HepG2 (cell line): ENCODE measurements at regions of chr6 and their contacts with region 1.

Region 1: GRCh38 chr6:110873981-110874879 is at the start of gene AMD1:
- DNase-seq: peak; percentile 95
- ATAC-seq: peak; percentile 91
- H3K4me3 ChIP-seq: peak within 1 kb of the TSS; percentile 96 to 99 (median 98)
- H3K27ac ChIP-seq: peak within 1 kb of the TSS; percentile 93
- H3K4me1 ChIP-seq: peaks cover 43% of the 10 kb centered on the region
- H3K27me3 ChIP-seq: no peaks in the 10 kb centered on the region; a peak in 1 of 5 replicates
- CTCF ChIP-seq: no peak
- EP300 ChIP-seq: peak in 1 of 2 experiments; percentile 24; a peak in 1 of 4 replicates
- POLR2A ChIP-seq: peak; percentile 99 to 100
- RAD21 ChIP-seq: no peak
- total RNA-seq, gene AMD1: 123 and 180 TPM in 2 replicates

Region 2: GRCh38 chr6:110528101-110528929 is 345.9 kb before region 1 on chr6:
- CTCF ChIA-PET with region 1: interaction called, 5 read pairs
- POLR2A ChIA-PET with region 1: interaction called, 5 read pairs
- in situ Hi-C with region 1: no loop called
- intact Hi-C with region 1: loop called (anchors 5 kb)
- DNase-seq: peak; percentile 62
- ATAC-seq: peak; percentile 55
- H3K4me3 ChIP-seq: no peak overlapping the region
- H3K27ac ChIP-seq: no peak overlapping the region
- H3K4me1 ChIP-seq: peaks cover 61% of the 10 kb centered on the region
- H3K27me3 ChIP-seq: no peaks in the 10 kb centered on the region
- CTCF ChIP-seq: peak; percentile 82
- EP300 ChIP-seq: peak in 1 of 2 experiments; percentile 18; a peak in 1 of 4 replicates
- POLR2A ChIP-seq: no peak
- RAD21 ChIP-seq: peak; percentile 71

Region 3: DNA sequence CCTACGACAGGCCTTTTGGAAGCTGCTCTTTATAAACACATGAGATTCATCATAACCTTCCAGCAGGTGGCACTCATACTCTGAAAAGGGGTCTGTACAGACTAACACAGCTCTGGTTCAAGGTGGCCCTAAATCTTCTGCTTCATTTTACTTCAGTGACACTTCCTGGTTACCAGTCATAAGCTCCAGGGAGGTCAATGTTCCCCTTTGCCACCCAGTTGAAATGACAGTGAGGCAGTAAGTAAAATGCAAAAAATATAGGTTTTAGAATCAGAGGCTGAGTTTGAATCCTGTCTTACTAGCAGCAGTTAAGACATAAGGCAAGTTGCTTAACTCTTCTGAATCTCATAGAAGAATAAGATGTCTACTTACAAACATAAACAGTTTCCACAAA is 191.8 kb before region 1 on chr6:
- CTCF ChIA-PET with region 1: interaction called, 7 read pairs
- POLR2A ChIA-PET with region 1: interaction called, 61 read pairs
- in situ Hi-C with region 1: loop called (anchors 5 kb)
- intact Hi-C with region 1: loop called (anchors 1 kb)
- DNase-seq: peak; percentile 85
- ATAC-seq: peak; percentile 98
- H3K4me3 ChIP-seq: peak overlapping the region in 1 of 3 experiments; percentile 6; a peak in 1 of 6 replicates
- H3K27ac ChIP-seq: peak overlapping the region; percentile 49
- H3K4me1 ChIP-seq: peaks cover 31% of the 10 kb centered on the region
- H3K27me3 ChIP-seq: no peaks in the 10 kb centered on the region
- CTCF ChIP-seq: peak; percentile 87
- EP300 ChIP-seq: no peak
- POLR2A ChIP-seq: no peak
- RAD21 ChIP-seq: peak; percentile 63; the same call in 1 of the 2 replicates

Region 4: DNA sequence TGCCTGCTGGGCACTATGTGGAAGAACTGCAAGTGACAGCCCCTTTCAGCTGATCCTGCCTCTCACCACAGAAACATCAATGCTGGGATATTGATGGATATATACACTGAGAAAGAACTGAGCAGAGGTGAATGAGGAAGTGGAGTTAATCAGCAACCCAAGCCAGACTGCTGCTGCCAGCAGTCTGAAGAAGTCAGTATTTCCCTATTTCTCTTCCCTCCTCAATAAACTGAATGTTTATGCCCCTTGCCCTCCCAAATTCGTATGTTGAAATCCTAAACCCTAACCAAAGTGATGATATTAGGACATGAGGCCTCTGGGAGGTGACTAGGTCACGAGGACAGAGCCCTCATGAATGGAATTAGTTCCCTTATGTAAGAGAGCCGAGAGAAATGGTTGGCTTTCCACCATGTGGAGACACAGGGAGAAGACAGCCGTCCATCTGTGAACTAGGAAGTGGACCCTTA is 135.3 kb before region 1 on chr6:
- CTCF ChIA-PET with region 1: no interaction called
- POLR2A ChIA-PET with region 1: interaction called, 7 read pairs
- in situ Hi-C with region 1: no loop called
- intact Hi-C with region 1: loop called (anchors 5 kb)
- DNase-seq: peak; percentile 86
- ATAC-seq: peak; percentile 99
- H3K4me3 ChIP-seq: peak overlapping the region in 2 of 3 experiments; percentile 23 to 24; a peak in 4 of 6 replicates
- H3K27ac ChIP-seq: peak overlapping the region; percentile 71
- H3K4me1 ChIP-seq: peaks cover 39% of the 10 kb centered on the region
- H3K27me3 ChIP-seq: no peaks in the 10 kb centered on the region
- CTCF ChIP-seq: peak; percentile 29
- EP300 ChIP-seq: peak in 1 of 2 experiments; percentile 56; a peak in 2 of 4 replicates
- POLR2A ChIP-seq: peak in 1 of 2 experiments; percentile 38; a peak in 1 of 4 replicates
- RAD21 ChIP-seq: no peak

Region 5: DNA sequence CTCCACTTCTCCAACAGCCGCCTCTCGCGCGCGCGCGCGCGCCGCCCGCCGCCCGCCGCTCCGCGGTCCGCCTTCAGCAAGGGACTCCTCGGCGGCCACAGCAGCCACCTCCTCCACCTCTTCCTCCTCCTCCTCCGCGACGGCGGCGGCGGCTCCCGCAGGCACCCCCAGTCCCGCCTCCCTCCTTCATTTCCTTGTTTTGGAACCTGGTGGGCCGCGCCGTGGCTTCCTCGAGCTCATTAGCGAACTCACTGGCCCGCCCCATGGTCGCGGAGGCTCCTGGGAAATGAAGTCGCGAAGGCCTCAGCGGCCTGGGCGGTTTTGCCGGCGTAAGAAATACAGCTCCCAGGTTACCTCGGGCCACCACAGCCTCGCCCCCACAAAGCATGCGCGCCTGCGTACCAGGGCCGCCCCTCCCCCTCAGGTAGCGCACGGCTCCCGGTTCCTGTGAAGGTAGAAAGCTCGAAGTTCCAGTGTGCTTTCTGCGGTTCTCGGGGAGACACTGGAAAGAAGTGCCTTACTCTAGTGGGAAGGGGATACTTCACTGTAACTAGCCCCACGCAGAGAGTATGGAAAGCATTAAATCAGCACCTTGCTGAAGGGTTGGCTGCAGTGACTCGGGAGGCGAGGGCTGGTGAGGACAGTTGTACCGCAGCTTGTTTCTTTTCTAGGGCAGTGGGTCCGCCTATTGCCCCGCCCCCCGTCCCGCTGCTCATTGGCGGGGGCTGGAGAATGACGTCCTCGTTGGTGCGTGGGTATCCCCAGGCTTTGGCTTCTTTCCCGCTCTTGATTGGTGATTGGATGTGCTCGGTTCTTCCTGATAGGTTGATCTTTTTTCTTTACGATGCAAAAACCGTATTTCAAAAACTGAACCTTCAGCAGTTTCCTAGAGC is 58.8 kb before region 1 on chr6 and contains the start of gene CDK19:
- CTCF ChIA-PET with region 1: no interaction called
- POLR2A ChIA-PET with region 1: interaction called, 163 read pairs
- in situ Hi-C with region 1: no loop called
- intact Hi-C with region 1: loop called (anchors 1 kb)
- DNase-seq: peak; percentile 98
- ATAC-seq: peak; percentile 91
- H3K4me3 ChIP-seq: peak within 1 kb of the TSS; percentile 92 to 94 (median 92)
- H3K27ac ChIP-seq: peak within 1 kb of the TSS; percentile 100
- H3K4me1 ChIP-seq: peaks cover 38% of the 10 kb centered on the region
- H3K27me3 ChIP-seq: no peaks in the 10 kb centered on the region; a peak in 1 of 5 replicates
- CTCF ChIP-seq: no peak
- EP300 ChIP-seq: no peak
- POLR2A ChIP-seq: peak; percentile 94 to 98
- RAD21 ChIP-seq: no peak
- total RNA-seq, gene CDK19: 13.4 and 20.8 TPM in 2 replicates

Region 6: GRCh38 chr6:110856296-110856695 is 17.9 kb before region 1 on chr6:
- CTCF ChIA-PET with region 1: no interaction called
- POLR2A ChIA-PET with region 1: interaction called, 17 read pairs
- in situ Hi-C with region 1: no loop called
- intact Hi-C with region 1: no loop called
- DNase-seq: no peak
- ATAC-seq: peak; percentile 49; the same call in 2 of the 3 replicates
- H3K4me3 ChIP-seq: no peak overlapping the region
- H3K27ac ChIP-seq: no peak overlapping the region
- H3K4me1 ChIP-seq: peaks cover 12% of the 10 kb centered on the region
- H3K27me3 ChIP-seq: no peaks in the 10 kb centered on the region
- CTCF ChIP-seq: no peak
- EP300 ChIP-seq: no peak
- POLR2A ChIP-seq: no peak
- RAD21 ChIP-seq: no peak

Region 7: GRCh38 chr6:110958329-110959192 is 84.3 kb after region 1 on chr6 and contains the start of gene GTF3C6:
- CTCF ChIA-PET with region 1: no interaction called
- POLR2A ChIA-PET with region 1: interaction called, 51 read pairs
- in situ Hi-C with region 1: no loop called
- intact Hi-C with region 1: loop called (anchors 5 kb)
- DNase-seq: peak; percentile 82
- ATAC-seq: peak; percentile 99
- H3K4me3 ChIP-seq: peak within 1 kb of the TSS; percentile 80 to 93 (median 91)
- H3K27ac ChIP-seq: peak within 1 kb of the TSS; percentile 92
- H3K4me1 ChIP-seq: peaks cover 36% of the 10 kb centered on the region
- H3K27me3 ChIP-seq: no peaks in the 10 kb centered on the region
- CTCF ChIP-seq: 0 out of 2 replicates have a peak, but pooled peaks have one; percentile 5
- EP300 ChIP-seq: 0 out of 4 replicates have a peak, but pooled peaks of 1 of the 2 experiments have one; percentile 20
- POLR2A ChIP-seq: peak; percentile 89 to 90
- RAD21 ChIP-seq: peak; percentile 45; the same call in 1 of the 2 replicates
- total RNA-seq, gene GTF3C6: 160 and 195 TPM in 2 replicates